PC-3 (cell line): ENCODE measurements at regions of chr9 and their contacts with region 1.

Region 1: DNA sequence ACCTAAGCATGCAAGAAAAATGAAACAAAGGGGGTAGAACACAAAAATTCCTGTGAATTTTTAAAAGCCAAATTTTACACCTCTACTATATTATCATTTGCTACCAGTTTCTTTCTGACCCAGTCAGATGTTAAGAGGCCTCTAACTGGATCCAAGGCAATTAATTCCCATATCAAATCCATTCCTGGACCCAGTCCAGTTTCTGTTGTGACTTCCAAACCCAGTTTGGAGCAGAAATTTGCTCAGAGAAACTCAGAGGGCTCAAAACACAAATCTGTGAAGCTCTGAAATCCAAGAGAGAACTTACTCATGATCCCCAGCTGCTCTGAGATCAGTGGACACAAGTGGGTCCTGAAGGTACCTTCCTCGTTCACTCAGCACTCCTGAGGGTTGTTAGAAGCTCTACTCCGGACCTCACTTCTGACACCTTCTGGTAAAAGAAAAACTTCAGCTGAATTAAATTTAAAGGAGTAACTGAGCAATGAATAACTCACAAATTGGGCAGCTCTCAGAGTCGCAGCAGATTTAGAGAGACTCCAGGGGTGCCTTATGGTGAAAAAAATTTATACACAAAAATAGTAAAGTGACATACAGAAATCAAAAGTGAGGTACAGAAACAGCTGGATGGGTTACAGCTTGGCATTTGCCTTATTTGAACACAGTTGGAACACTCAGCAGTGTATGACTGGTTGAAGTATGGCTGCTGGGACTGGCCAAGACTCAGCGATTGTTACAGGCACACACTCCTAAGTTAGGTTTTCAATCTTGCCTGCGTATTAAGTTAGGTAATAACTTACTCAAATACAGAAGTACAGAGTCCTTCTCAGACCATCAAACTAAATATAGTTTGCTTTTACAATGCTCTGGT is 32.4 kb downstream of the INSL4 start:
- DNase-seq: peak; percentile 32
- ATAC-seq: peak; percentile 49
- H3K4me3 ChIP-seq: no peak overlapping the region
- H3K27ac ChIP-seq: no peak overlapping the region
- H3K4me1 ChIP-seq: peaks cover 6% of the 10 kb centered on the region
- H3K27me3 ChIP-seq: no peaks in the 10 kb centered on the region
- CTCF ChIP-seq: no peak; the same call in 1 of the 2 replicates

Region 2: GRCh38 chr9:5186416-5187169 is 77.0 kb before region 1 on chr9:
- CTCF ChIA-PET with region 1: interaction called, 4 read pairs
- POLR2A ChIA-PET with region 1: no interaction called
- intact Hi-C with region 1: loop called (anchors 5 kb)
- DNase-seq: peak; percentile 71
- ATAC-seq: peak; percentile 83
- H3K4me3 ChIP-seq: no peak overlapping the region
- H3K27ac ChIP-seq: no peak overlapping the region
- H3K4me1 ChIP-seq: no peaks in the 10 kb centered on the region
- H3K27me3 ChIP-seq: no peaks in the 10 kb centered on the region
- CTCF ChIP-seq: peak; percentile 76

Region 3: DNA sequence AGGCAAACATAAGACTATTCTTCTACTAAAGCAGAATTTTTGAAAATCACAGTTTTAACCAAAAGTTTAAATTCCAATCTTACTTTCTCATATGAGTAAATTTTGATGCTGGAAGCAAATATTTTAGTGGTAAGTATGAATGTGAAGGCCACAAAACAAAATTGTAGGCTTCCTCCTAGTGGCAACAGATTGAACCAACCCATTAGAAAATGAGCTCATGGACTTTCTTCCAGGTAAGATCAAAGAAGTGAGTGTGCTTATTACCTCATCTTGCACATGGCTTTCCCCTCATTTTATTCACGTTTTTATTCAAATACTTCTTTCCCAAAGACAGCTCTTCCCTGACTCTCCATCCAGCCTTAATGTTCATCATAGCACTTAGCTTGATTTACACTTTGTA is 57.5 kb after region 1 on chr9:
- CTCF ChIA-PET with region 1: no interaction called
- POLR2A ChIA-PET with region 1: no interaction called
- intact Hi-C with region 1: loop called (anchors 2 kb)
- DNase-seq: peak; percentile 29
- ATAC-seq: no peak
- H3K4me3 ChIP-seq: no peak overlapping the region
- H3K27ac ChIP-seq: no peak overlapping the region
- H3K4me1 ChIP-seq: no peaks in the 10 kb centered on the region
- H3K27me3 ChIP-seq: no peaks in the 10 kb centered on the region
- CTCF ChIP-seq: peak; percentile 41

Region 4: DNA sequence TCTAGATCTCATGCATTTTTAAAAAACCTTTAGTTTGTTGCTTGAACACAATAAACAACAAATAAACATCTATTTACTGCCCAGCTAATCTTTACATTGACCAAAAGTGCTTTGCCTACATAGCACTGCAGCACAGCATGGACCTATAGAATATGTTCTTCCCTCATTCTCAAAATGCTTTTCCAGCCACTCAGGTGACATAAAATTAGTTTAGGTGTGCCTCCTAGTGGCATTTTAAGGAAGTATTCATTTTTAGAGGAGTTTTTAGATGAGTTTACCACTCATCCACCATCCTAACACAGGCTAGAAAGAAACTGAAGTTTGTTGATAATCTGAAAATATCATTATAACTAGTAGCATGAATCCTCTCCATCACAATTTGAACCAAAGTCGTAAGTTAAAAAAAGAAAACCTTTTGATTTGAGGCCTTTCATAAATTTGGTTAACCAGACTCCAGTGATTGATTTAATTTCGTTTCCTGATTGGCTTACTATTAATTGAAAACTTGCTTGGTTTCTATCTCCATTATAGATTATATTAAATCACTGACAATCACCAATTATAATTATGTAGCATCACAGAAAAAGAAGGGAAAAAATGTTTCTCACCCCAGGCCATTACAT is 161.5 kb after region 1 on chr9:
- CTCF ChIA-PET with region 1: no interaction called
- POLR2A ChIA-PET with region 1: no interaction called
- intact Hi-C with region 1: loop called (anchors 10 kb)
- DNase-seq: peak; percentile 63
- ATAC-seq: peak; percentile 38
- H3K4me3 ChIP-seq: no peak overlapping the region
- H3K27ac ChIP-seq: no peak overlapping the region
- H3K4me1 ChIP-seq: no peaks in the 10 kb centered on the region
- H3K27me3 ChIP-seq: no peaks in the 10 kb centered on the region
- CTCF ChIP-seq: peak; percentile 71